Right ventricle myocardium inferior (tissue), 1 donor: ENCODE measurements at regions of chr17 and their contacts with region 1.

Region 1: DNA sequence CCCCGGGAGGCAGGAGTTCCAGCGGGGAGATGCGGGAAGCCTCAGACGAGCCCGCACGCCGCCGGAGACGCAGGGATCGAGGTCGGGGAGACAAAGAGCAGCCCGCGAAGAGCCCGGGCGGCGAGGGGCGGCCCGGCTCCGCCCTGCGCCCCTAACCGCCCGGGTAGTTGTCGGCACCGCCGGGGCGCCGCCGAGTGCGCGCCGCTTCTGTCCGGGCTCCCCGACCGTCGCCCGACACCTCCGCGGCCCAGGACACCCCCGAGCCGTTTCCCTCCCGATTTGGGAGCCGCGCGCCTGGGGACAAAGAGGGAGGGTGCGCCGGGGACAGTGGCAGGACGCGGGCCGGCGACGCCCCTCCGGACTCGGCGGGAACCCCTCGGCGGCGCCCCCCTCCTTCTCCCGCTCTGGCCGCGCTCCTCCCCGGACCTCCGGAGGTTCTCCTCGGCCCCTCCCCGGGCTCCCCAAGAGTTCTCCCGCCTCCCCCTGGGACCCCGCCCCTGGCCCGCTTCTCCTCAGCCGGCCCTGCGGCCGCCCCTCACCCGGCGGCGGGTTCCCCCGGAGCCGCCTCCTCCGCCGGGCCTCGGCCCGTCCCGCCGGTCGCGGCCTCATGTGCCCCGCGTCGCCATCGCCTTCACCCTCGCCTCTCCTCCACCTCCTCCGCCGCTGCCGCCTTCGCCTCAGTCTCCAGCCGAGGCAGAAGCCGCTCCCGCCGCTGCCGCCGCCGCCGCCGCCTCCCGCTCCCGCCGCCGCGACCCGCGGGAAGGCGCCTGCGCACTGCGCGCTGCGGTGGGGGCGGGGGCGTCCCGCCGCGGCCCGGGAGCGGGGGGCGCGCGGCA is at the start of gene GJC1:
- DNase-seq: no peak
- ATAC-seq: peak; percentile 56
- total RNA-seq, gene GJC1: 21.9 TPM

Region 2: GRCh38 chr17:44781553-44782495 is 47.9 kb before region 1 on chr17:
- intact Hi-C with region 1: loop called (anchors 1 kb)
- DNase-seq: no peak
- ATAC-seq: peak; percentile 59

Region 3: GRCh38 chr17:44864866-44865660 is 35.3 kb after region 1 on chr17:
- intact Hi-C with region 1: loop called (anchors 5 kb)
- DNase-seq: peak; percentile 78
- ATAC-seq: peak; percentile 61

Region 4: GRCh38 chr17:44878627-44879221 is 49.0 kb after region 1 on chr17:
- intact Hi-C with region 1: no loop called
- DNase-seq: no peak
- ATAC-seq: no peak